Right ventricle myocardium superior (tissue), 1 donor: ENCODE measurements at regions of chr4 and their contacts with region 1.

Region 1: GRCh38 chr4:68375667-68376559 is 26.0 kb upstream of the YTHDC1 start:
- DNase-seq: peak; percentile 42
- ATAC-seq: peak; percentile 65

Region 2: DNA sequence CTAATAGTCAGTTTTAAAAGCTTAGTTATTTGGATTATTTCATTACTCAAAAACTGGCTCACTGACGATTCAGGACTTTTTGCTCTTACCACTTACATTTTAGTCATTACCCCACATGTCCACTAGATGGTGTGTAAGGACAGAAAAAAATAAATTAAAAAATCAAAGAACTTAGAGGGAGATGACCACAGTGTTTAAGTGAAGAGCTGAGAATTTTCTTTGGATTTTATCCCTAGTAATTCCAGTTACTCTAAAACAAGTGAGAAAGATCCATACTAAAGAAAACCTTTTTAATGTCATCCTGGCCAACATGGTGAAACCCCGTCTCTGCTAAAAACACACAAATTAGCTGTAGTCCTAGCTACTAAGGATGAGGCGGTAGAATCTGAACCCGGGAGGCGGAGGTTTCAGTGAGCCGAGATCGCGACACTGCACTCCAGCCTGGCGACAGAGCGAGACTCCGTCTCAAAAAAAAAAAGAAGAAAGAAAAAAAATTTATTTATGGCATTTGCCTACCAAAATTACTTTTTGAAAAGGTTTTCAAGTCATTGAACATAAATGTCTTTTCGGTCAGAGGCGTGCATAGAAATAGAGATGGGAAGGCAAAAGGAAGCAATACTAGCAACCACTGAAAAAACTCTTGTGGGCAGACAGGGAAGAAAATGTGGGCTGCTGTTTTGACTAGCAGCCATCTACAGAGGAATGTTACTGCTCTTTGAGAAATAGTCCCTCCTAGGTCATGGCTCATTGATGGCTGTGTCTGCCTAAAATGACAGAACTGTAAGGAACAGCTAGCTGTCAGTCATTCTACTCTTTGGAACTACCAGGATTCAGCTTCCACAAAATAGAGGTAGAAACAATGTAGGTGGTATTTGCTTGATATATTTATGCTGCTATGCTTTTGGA is 103.8 kb before region 1 on chr4:
- intact Hi-C with region 1: loop called (anchors 2 kb)
- DNase-seq: no peak
- ATAC-seq: peak; percentile 83